Astrocyte of the cerebellum (primary cell): ENCODE measurements at regions of chr20 and their contacts with region 1.

Region 1: DNA sequence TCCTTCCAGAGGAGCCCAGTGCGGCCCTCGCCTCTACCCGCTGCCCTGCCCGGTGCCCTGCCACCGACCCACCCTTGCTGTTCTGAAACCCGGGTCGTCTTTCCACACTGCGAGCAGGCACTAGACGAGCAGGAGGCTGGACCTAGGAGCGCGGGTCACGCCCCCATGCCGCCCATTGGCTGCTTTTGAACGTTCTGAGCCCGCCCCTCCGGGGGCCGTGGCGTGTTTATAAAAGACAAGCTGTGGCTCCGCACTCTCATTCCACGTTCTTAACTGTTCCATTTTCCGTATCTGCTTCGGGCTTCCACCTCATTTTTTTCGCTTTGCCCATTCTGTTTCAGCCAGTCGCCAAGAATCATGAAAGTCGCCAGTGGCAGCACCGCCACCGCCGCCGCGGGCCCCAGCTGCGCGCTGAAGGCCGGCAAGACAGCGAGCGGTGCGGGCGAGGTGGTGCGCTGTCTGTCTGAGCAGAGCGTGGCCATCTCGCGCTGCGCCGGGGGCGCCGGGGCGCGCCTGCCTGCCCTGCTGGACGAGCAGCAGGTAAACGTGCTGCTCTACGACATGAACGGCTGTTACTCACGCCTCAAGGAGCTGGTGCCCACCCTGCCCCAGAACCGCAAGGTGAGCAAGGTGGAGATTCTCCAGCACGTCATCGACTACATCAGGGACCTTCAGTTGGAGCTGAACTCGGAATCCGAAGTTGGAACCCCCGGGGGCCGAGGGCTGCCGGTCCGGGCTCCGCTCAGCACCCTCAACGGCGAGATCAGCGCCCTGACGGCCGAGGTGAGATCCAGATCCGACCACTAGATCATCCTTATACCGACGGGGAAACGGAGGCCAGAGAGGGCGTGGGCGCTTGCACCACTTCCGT is at the start of gene ID1:
- DNase-seq: peak; percentile 95
- H3K4me3 ChIP-seq: peak within 1 kb of the TSS; percentile 65
- CTCF ChIP-seq: no peak

Region 2: GRCh38 chr20:31569163-31570020 is 35.9 kb before region 1 on chr20:
- in situ Hi-C with region 1: loop called (anchors 5 kb)
- DNase-seq: no peak
- H3K4me3 ChIP-seq: no peak overlapping the region
- CTCF ChIP-seq: peak; percentile 92